ENCODE measurements at regions of chr19 and their contacts with region 1.

Region 1: DNA sequence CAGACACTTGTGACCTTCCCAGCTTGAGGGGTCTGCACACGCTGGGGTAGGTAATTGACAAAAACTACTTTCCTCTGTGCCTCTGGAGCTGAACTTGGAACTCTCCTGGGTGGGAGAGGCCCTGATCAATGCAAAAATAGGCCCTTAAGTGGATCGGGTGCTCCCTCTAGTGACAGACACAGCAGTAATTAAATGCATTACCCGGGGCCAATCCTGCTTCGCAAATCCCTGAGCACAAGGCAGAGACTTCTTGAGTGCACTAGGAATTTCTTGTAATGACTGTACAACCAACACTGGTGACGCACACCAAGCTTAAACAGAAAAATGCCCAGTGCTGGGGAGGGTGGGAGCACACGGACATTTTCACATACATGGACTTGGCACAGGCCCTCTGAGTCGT is 10.6 kb upstream of the UBE2S start:
- DNase-seq: peak in 1 of 2 donors; percentile 62
- ATAC-seq: peak; percentile 95

Region 2: GRCh38 chr19:55141696-55142095 is 276.5 kb before region 1 on chr19:
- intact Hi-C with region 1: loop called in 1 of 2 experiments (anchors 5 kb)
- DNase-seq: no peak
- ATAC-seq: peak; percentile 11

Region 3: DNA sequence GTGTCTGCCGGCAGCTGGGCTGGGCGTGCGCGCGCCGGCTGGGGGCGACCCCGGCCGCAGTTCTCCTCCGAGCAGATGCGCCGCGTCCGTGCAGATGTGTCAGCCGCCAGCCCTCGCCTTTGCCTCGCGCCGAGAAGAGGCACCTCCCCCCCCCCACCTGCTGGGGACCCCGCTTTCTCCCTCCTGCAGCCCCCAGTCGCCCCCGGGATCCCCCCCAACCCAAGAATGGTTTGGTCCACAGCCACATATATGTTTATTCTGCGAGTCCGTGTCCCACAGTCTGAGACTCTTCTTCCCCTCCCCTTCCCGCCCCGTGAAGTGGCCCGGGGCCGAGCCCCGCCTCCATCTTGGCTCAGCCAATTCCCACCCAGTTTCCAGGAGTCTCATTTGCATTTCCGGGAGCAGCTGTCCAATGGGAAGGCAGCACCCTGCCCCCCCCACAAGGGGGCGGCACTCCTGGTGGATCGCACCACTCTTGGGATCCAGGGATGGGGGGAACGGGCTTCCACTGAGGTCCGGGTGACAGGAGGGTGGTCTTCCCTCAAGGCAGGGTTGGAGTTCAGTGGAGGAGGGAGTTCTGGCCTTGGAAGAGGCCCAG is 34.7 kb after region 1 on chr19:
- intact Hi-C with region 1: no loop called
- DNase-seq: no peak
- ATAC-seq: peak; percentile 47

Region 4: GRCh38 chr19:55536951-55537740 is 119.0 kb after region 1 on chr19 and contains the start of gene SBK2:
- intact Hi-C with region 1: no loop called
- DNase-seq: no peak
- ATAC-seq: no peak
- total RNA-seq, gene SBK2: not detected

Measured in left colon (tissue), 2 donors.